ENCODE measurements at regions of chr20 and their contacts with region 1.

Region 1: DNA sequence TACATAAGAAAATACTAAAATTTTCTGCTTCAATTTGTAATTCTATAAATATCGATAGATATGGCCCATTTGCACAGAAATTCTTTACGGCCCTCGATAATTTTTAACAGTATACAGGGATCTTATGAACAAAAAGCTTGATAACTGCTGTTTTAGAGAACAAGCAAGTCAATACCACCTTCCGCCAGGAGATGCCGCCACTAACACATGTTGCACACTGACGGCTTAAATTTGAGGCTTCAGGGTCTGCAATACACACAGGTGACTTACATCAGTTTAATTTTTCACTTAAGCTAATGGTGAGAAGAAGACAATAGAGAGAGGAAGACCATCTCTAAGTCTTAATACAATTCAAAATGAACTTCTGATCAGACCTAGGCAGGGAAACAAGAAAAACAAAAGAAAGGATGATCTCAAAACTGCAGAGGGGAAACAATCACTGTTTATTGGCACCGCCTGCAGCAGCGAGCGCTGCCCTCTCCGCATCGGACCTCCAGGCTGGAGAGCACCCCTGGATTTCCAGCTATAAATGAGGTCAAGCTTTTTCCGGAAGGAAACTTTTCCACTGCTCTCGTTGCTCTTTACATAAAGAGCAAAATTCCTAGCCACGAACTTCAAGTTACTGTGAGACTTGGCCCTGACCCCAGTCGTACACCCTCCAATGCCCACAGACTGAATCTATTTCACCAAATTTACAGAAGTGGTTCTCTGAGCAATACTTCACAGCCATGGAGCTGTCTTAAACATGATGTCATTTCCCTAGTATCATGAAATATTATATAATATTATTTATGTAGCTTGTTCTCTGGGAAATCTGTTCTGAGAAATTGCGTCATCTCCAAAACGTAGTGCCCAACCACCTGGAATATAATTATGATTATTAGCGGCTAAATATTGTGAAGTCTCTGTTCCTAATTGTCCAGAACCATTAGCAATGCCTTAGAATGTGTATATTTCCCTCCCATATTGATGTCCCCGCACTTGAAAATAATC is 54.1 kb downstream of the OTOR start:
- DNase-seq: peak; percentile 39 to 65 (median 54)
- H3K4me3 ChIP-seq: no peak overlapping the region
- H3K27ac ChIP-seq: no peak overlapping the region
- H3K4me1 ChIP-seq: no peaks in the 10 kb centered on the region
- H3K27me3 ChIP-seq: peaks cover 2 to 33% (median 8%) of the 10 kb centered on the region in 5 experiments

Region 2: GRCh38 chr20:16781496-16781895 is 20.7 kb before region 1 on chr20:
- CTCF ChIA-PET with region 1: no interaction called
- POLR2A ChIA-PET with region 1: no interaction called
- DNase-seq: no peak
- H3K4me3 ChIP-seq: no peak overlapping the region
- H3K27ac ChIP-seq: no peak overlapping the region
- H3K4me1 ChIP-seq: no peaks in the 10 kb centered on the region
- H3K27me3 ChIP-seq: peaks cover 0 to 3% (median 0%) of the 10 kb centered on the region in 5 experiments

Region 3: GRCh38 chr20:17431621-17432364 is 629.6 kb after region 1 on chr20:
- CTCF ChIA-PET with region 1: interaction called, 15 read pairs
- POLR2A ChIA-PET with region 1: no interaction called
- DNase-seq: peak; percentile 35 to 55 (median 41)
- H3K4me3 ChIP-seq: no peak overlapping the region
- H3K27ac ChIP-seq: no peak overlapping the region
- H3K4me1 ChIP-seq: no peaks in the 10 kb centered on the region
- H3K27me3 ChIP-seq: peaks cover 0 to 14% (median 2%) of the 10 kb centered on the region in 5 experiments